Activated B cell treated with CpG ODN at 0.5 μM for 24 hours (primary cell): ENCODE measurements at regions of chr19 and their contacts with region 1.

Region 1: GRCh38 chr19:32711747-32712146 is 7.8 kb upstream of the TDRD12 start:
- DNase-seq: no peak
- ATAC-seq: no peak
- H3K4me3 Mint-ChIP-seq: no peak overlapping the region
- H3K27ac Mint-ChIP-seq: no peak overlapping the region
- H3K4me1 Mint-ChIP-seq: peaks cover 2% of the 10 kb centered on the region
- H3K27me3 Mint-ChIP-seq: no peaks in the 10 kb centered on the region
- CTCF ChIP-seq: no peak

Region 2: GRCh38 chr19:32642771-32643170 is 69.0 kb before region 1 on chr19:
- CTCF ChIA-PET with region 1: no interaction called
- POLR2A ChIA-PET with region 1: no interaction called
- intact Hi-C with region 1: no loop called
- DNase-seq: no peak
- ATAC-seq: no peak
- H3K4me3 Mint-ChIP-seq: no peak overlapping the region
- H3K27ac Mint-ChIP-seq: no peak overlapping the region
- H3K4me1 Mint-ChIP-seq: peaks cover 2% of the 10 kb centered on the region
- H3K27me3 Mint-ChIP-seq: no peaks in the 10 kb centered on the region
- CTCF ChIP-seq: no peak

Region 3: GRCh38 chr19:32895384-32895783 is 183.6 kb after region 1 on chr19:
- CTCF ChIA-PET with region 1: no interaction called
- POLR2A ChIA-PET with region 1: interaction called, 12 read pairs
- intact Hi-C with region 1: no loop called
- DNase-seq: no peak
- ATAC-seq: no peak
- H3K4me3 Mint-ChIP-seq: no peak overlapping the region
- H3K27ac Mint-ChIP-seq: no peak overlapping the region
- H3K4me1 Mint-ChIP-seq: peaks cover 9% of the 10 kb centered on the region
- H3K27me3 Mint-ChIP-seq: no peaks in the 10 kb centered on the region
- CTCF ChIP-seq: no peak